K562 (cell line): ENCODE measurements at regions of chr6 and their contacts with region 1.

Region 1: GRCh38 chr6:116969211-116969863 is 92.3 kb downstream of the RFX6 start:
- DNase-seq: peak; percentile 19 to 64 (median 42)
- ATAC-seq: peak; percentile 89
- H3K4me3 ChIP-seq: no peak overlapping the region
- H3K27ac ChIP-seq: no peak overlapping the region
- H3K4me1 ChIP-seq: no peaks in the 10 kb centered on the region
- H3K27me3 ChIP-seq: no peaks in the 10 kb centered on the region
- CTCF ChIP-seq: peak; percentile 58 to 69 (median 63)
- EP300 ChIP-seq: no peak
- POLR2A ChIP-seq: no peak
- RAD21 ChIP-seq: peak; percentile 28 to 75

Region 2: GRCh38 chr6:116881236-116881635 is 88.1 kb before region 1 on chr6:
- CTCF ChIA-PET with region 1: no interaction called
- POLR2A ChIA-PET with region 1: no interaction called
- in situ Hi-C with region 1: no loop called
- intact Hi-C with region 1: loop called (anchors 5 kb)
- DNase-seq: no peak
- ATAC-seq: no peak
- H3K4me3 ChIP-seq: no peak overlapping the region
- H3K27ac ChIP-seq: no peak overlapping the region
- H3K4me1 ChIP-seq: peaks cover 0 to 10% of the 10 kb centered on the region in 2 experiments; a peak in 2 of 5 replicates
- H3K27me3 ChIP-seq: peaks cover 10 to 12% of the 10 kb centered on the region in 2 experiments; a peak in 4 of 5 replicates
- CTCF ChIP-seq: no peak
- EP300 ChIP-seq: no peak
- POLR2A ChIP-seq: no peak
- RAD21 ChIP-seq: peak in 1 of 2 experiments; percentile 19; a peak in 1 of 4 replicates

Region 3: GRCh38 chr6:117317261-117317660 is 347.9 kb after region 1 on chr6:
- CTCF ChIA-PET with region 1: interaction called, 4 read pairs
- POLR2A ChIA-PET with region 1: no interaction called
- in situ Hi-C with region 1: no loop called
- intact Hi-C with region 1: loop called (anchors 2 kb)
- DNase-seq: peak in 2 of 4 experiments; percentile 17 to 28
- ATAC-seq: peak; percentile 71
- H3K4me3 ChIP-seq: no peak overlapping the region
- H3K27ac ChIP-seq: no peak overlapping the region
- H3K4me1 ChIP-seq: no peaks in the 10 kb centered on the region
- H3K27me3 ChIP-seq: no peaks in the 10 kb centered on the region
- CTCF ChIP-seq: peak; percentile 32 to 60 (median 58); a peak in 5 of 6 replicates
- EP300 ChIP-seq: no peak
- POLR2A ChIP-seq: no peak
- RAD21 ChIP-seq: peak; percentile 31 to 58; a peak in 3 of 4 replicates

Region 4: DNA sequence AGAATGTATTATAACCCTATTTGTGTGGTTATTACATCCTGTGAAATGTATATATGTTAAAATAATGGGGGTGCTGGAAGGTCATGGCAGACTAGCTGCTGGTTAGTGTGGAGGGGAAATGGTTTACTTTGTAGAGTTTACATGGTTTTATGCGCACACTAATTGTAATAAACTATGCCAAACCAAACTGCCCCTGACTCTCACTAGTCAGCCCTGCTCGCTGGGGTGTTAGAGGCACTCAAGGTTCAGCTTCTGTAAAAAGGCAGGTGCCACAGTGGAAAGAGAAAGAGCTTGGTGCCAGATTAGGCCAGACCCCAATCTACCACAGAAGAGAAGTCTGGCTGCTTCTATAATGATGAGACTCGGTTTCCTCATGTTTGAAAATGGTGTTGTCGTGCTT is 580.3 kb after region 1 on chr6:
- CTCF ChIA-PET with region 1: no interaction called
- POLR2A ChIA-PET with region 1: no interaction called
- in situ Hi-C with region 1: no loop called
- intact Hi-C with region 1: loop called (anchors 5 kb)
- DNase-seq: no peak
- ATAC-seq: no peak
- H3K4me3 ChIP-seq: no peak overlapping the region
- H3K27ac ChIP-seq: no peak overlapping the region
- H3K4me1 ChIP-seq: peaks cover 0 to 16% of the 10 kb centered on the region in 2 experiments; a peak in 3 of 5 replicates
- H3K27me3 ChIP-seq: no peaks in the 10 kb centered on the region
- CTCF ChIP-seq: no peak
- EP300 ChIP-seq: no peak
- POLR2A ChIP-seq: no peak
- RAD21 ChIP-seq: no peak